Caco-2 (cell line): ENCODE measurements at regions of chr17 and their contacts with region 1.

Region 1: DNA sequence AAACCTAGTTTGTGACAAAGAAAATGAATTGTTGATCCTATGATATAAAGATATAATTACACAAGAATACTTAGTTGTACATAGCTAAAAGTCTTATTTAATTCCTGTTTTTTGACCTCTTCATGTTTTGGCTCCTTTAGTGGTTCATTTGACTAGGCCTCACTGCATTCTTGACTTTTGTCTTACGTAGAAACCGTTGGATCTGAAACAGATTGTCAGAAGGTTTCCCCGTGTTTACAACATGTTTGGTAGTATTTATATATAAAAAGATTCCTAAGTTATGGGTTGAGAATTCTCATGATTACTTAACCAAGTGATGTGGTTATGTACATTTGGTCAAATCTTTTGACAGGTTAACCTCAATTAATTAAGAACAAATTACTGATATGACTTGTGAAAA is 162.8 kb downstream of the BCAS3 start:
- DNase-seq: no peak
- H3K4me3 ChIP-seq: no peak overlapping the region
- H3K4me3 Mint-ChIP-seq: no peak overlapping the region
- H3K27ac Mint-ChIP-seq: no peak overlapping the region
- H3K4me1 ChIP-seq: no peaks in the 10 kb centered on the region
- H3K4me1 Mint-ChIP-seq: no peaks in the 10 kb centered on the region
- H3K27me3 ChIP-seq: no peaks in the 10 kb centered on the region
- H3K27me3 Mint-ChIP-seq: peaks cover 7% of the 10 kb centered on the region
- CTCF ChIP-seq: no peak

Region 2: GRCh38 chr17:60545465-60546454 is 294.7 kb before region 1 on chr17:
- CTCF ChIA-PET with region 1: no interaction called
- POLR2A ChIA-PET with region 1: interaction called, 11 read pairs
- intact Hi-C with region 1: no loop called
- DNase-seq: no peak
- H3K4me3 ChIP-seq: no peak overlapping the region
- H3K4me3 Mint-ChIP-seq: no peak overlapping the region
- H3K27ac Mint-ChIP-seq: no peak overlapping the region
- H3K4me1 ChIP-seq: no peaks in the 10 kb centered on the region
- H3K4me1 Mint-ChIP-seq: no peaks in the 10 kb centered on the region
- H3K27me3 ChIP-seq: no peaks in the 10 kb centered on the region
- H3K27me3 Mint-ChIP-seq: no peaks in the 10 kb centered on the region
- CTCF ChIP-seq: no peak

Region 3: GRCh38 chr17:60827943-60828342 is 12.5 kb before region 1 on chr17:
- CTCF ChIA-PET with region 1: no interaction called
- POLR2A ChIA-PET with region 1: no interaction called
- intact Hi-C with region 1: no loop called
- DNase-seq: no peak
- H3K4me3 ChIP-seq: no peak overlapping the region
- H3K4me3 Mint-ChIP-seq: no peak overlapping the region
- H3K27ac Mint-ChIP-seq: no peak overlapping the region
- H3K4me1 ChIP-seq: no peaks in the 10 kb centered on the region; the same call in 1 of the 2 replicates
- H3K4me1 Mint-ChIP-seq: no peaks in the 10 kb centered on the region
- H3K27me3 ChIP-seq: no peaks in the 10 kb centered on the region
- H3K27me3 Mint-ChIP-seq: peaks cover 6% of the 10 kb centered on the region
- CTCF ChIP-seq: no peak